ENCODE measurements at regions of chr6 and their contacts with region 1.

Region 1: DNA sequence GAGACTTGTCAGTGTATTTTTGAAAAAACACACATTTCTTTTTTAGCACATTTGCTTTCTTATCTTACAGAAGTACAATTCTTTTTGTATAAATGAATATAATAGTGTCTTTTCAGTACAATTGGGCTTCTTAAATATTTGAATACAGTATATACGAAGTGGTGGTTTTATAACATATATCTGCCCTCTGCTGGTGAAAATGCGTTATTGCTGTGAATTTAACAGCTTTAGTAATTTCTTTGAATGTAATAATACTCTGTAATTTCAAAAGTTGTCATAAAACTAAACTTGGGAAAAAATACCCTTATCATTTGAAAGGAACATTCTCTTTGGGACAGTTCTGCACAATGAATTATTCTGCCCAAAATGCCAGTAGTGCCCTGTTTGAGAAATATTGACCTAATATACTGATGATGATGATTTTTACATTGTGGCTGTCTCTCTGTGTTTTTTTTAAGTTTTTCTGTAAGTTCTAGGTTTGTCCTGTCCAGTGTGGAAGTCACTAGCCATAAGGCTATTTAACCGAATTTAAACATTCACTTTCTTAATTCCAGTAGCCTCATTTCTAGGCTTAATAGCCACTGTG is 19.0 kb downstream of the SMAP1 start:
- ATAC-seq: peak in 1 of 8 experiments; percentile 36
- H3K4me3 ChIP-seq: no peak overlapping the region
- H3K27ac ChIP-seq: no peak overlapping the region
- H3K4me1 ChIP-seq: no peaks in the 10 kb centered on the region

Region 2: DNA sequence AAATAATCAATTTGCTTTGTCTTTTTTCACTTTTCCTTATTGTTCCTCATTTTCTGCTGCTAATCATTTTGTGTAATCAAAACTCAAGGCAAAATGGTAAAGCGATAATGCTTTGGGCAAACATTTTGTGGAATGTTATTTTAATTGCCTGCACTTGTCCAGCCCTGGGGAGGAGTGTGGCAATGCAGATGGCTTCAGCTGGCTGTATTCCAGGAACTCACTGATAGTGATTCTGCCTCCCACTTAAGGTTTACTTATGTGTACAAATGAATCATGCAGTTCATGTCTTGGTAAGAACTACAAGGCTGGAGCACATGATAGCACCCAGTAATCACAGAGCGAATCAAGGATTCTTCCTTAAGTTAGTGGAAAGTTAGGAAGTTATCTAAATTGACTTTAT is 712.4 kb before region 1 on chr6:
- in situ Hi-C with region 1: no loop called
- ATAC-seq: peak in 5 of 8 experiments; percentile 54 to 100 (median 91)
- H3K4me3 ChIP-seq: no peak overlapping the region
- H3K27ac ChIP-seq: no peak overlapping the region
- H3K4me1 ChIP-seq: no peaks in the 10 kb centered on the region

Region 3: GRCh38 chr6:70221025-70221714 is 465.5 kb before region 1 on chr6:
- in situ Hi-C with region 1: loop called in 2 of 9 experiments (anchors 25 kb)
- ATAC-seq: peak in 6 of 8 experiments; percentile 44 to 74 (median 62)
- H3K4me3 ChIP-seq: no peak overlapping the region
- H3K27ac ChIP-seq: no peak overlapping the region
- H3K4me1 ChIP-seq: no peaks in the 10 kb centered on the region

Region 4: GRCh38 chr6:70310063-70310694 is 376.5 kb before region 1 on chr6:
- in situ Hi-C with region 1: loop called in 2 of 9 experiments (anchors 25 kb)
- ATAC-seq: peak in 3 of 8 experiments; percentile 35 to 42 (median 40)
- H3K4me3 ChIP-seq: no peak overlapping the region
- H3K27ac ChIP-seq: no peak overlapping the region
- H3K4me1 ChIP-seq: peaks cover 0 to 8% of the 10 kb centered on the region in 2 donors

Region 5: GRCh38 chr6:70566751-70567382 is 119.8 kb before region 1 on chr6 and contains the start of gene SDHAF4:
- in situ Hi-C with region 1: loop called in 1 of 9 experiments (anchors 25 kb)
- ATAC-seq: peak; percentile 97 to 99 (median 99)
- H3K4me3 ChIP-seq: peak within 1 kb of the TSS; percentile 52 to 77 (median 68)
- H3K27ac ChIP-seq: peak within 1 kb of the TSS; percentile 79 to 87
- H3K4me1 ChIP-seq: peaks cover 3% of the 10 kb centered on the region in 2 donors
- total RNA-seq, gene SDHAF4: 15.6 to 33.4 (median 21.2) TPM